CD8-positive, alpha-beta T cell (primary cell): ENCODE measurements at regions of chr4 and their contacts with region 1.

Region 1: DNA sequence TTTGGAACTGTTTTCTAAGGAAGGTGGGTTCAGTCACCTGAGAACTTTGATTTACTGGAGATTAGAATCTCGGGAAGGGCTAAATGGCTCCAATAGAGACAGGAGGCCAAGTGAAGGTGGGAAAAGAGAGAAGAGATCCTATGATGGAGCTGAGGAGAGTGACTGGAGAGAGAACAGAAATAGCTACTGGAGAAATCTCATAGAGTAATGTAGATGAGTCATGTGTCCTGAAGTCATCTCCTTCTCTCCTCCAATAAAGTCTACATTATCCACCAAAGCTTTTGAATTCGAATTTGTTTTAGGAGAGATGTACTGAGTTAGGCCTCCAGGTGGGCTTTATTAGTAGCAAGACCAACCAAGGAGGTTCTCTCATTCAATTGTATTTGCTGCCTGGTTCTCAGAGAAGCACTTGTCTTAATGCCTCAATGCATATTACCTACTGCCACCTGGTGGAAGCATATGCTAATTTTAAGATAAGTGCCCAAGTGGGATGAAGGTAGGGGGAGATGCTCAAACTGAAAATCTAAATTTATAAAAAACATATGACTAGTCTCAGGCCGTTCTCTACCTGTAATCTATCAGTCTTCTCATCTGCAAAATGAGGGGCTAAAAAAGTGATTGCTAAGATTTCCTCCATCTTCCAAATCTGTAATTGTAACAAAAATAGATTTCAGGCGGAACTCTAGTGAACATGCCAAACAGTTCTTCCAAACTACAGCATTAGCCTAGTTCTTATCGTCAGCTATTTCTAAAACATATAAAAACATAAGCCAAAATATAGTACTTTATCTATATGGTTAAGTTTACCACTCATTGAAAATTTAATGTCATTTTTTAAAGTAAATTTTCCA is 24.4 kb downstream of the TXK start:
- DNase-seq: peak in 3 of 9 experiments; percentile 29 to 74 (median 65)
- ATAC-seq: peak; percentile 82
- H3K4me3 ChIP-seq: no peak overlapping the region
- H3K4me3 Mint-ChIP-seq: no peak overlapping the region
- H3K27ac ChIP-seq: no peak overlapping the region
- H3K27ac Mint-ChIP-seq: peak overlapping the region; percentile 75
- H3K4me1 ChIP-seq: peaks cover 34% of the 10 kb centered on the region
- H3K4me1 Mint-ChIP-seq: peaks cover 56% of the 10 kb centered on the region
- H3K27me3 ChIP-seq: no peaks in the 10 kb centered on the region
- H3K27me3 Mint-ChIP-seq: no peaks in the 10 kb centered on the region
- CTCF ChIP-seq: peak; percentile 67

Region 2: GRCh38 chr4:48033825-48034413 is 75.7 kb before region 1 on chr4:
- CTCF ChIA-PET with region 1: interaction called, 12 read pairs
- POLR2A ChIA-PET with region 1: no interaction called
- intact Hi-C with region 1: no loop called
- DNase-seq: peak; percentile 36 to 76 (median 66)
- ATAC-seq: peak; percentile 96
- H3K4me3 ChIP-seq: no peak overlapping the region
- H3K4me3 Mint-ChIP-seq: no peak overlapping the region
- H3K27ac ChIP-seq: no peak overlapping the region
- H3K27ac Mint-ChIP-seq: no peak overlapping the region
- H3K4me1 ChIP-seq: no peaks in the 10 kb centered on the region
- H3K4me1 Mint-ChIP-seq: peaks cover 4% of the 10 kb centered on the region
- H3K27me3 ChIP-seq: no peaks in the 10 kb centered on the region
- H3K27me3 Mint-ChIP-seq: no peaks in the 10 kb centered on the region
- CTCF ChIP-seq: peak; percentile 82

Region 3: DNA sequence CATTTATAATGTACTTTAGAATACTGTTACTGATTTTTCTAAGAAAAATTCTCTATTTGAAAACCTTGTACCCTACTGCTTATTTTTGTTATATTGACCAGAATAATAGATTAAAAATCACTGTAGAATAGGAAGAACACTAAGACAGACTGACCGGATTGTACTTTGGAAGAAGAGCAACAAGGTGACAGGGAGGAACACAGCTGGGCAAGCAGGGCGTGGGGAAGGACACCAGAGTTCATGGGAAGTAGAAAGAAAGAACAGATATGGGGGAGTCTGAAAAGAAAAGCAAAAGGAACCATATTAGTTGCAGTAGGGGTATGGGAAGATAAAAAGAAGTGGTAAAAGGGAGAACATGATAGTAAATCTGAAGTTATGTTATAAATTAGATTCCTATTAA is 14.2 kb before region 1 on chr4:
- CTCF ChIA-PET with region 1: interaction called, 11 read pairs
- POLR2A ChIA-PET with region 1: no interaction called
- intact Hi-C with region 1: no loop called
- DNase-seq: no peak
- ATAC-seq: no peak
- H3K4me3 ChIP-seq: no peak overlapping the region
- H3K4me3 Mint-ChIP-seq: no peak overlapping the region
- H3K27ac ChIP-seq: no peak overlapping the region
- H3K27ac Mint-ChIP-seq: peak overlapping the region; percentile 75
- H3K4me1 ChIP-seq: no peaks in the 10 kb centered on the region
- H3K4me1 Mint-ChIP-seq: peaks cover 15% of the 10 kb centered on the region
- H3K27me3 ChIP-seq: no peaks in the 10 kb centered on the region
- H3K27me3 Mint-ChIP-seq: no peaks in the 10 kb centered on the region
- CTCF ChIP-seq: no peak

Region 4: GRCh38 chr4:48122756-48123155 is 13.1 kb after region 1 on chr4:
- CTCF ChIA-PET with region 1: interaction called, 15 read pairs
- POLR2A ChIA-PET with region 1: interaction called, 3 read pairs
- intact Hi-C with region 1: loop called in 1 of 2 experiments (anchors 2 kb)
- DNase-seq: no peak
- ATAC-seq: no peak
- H3K4me3 ChIP-seq: no peak overlapping the region
- H3K4me3 Mint-ChIP-seq: no peak overlapping the region
- H3K27ac ChIP-seq: no peak overlapping the region
- H3K27ac Mint-ChIP-seq: no peak overlapping the region
- H3K4me1 ChIP-seq: peaks cover 96% of the 10 kb centered on the region
- H3K4me1 Mint-ChIP-seq: peaks cover 69% of the 10 kb centered on the region
- H3K27me3 ChIP-seq: no peaks in the 10 kb centered on the region
- H3K27me3 Mint-ChIP-seq: no peaks in the 10 kb centered on the region
- CTCF ChIP-seq: no peak

Region 5: DNA sequence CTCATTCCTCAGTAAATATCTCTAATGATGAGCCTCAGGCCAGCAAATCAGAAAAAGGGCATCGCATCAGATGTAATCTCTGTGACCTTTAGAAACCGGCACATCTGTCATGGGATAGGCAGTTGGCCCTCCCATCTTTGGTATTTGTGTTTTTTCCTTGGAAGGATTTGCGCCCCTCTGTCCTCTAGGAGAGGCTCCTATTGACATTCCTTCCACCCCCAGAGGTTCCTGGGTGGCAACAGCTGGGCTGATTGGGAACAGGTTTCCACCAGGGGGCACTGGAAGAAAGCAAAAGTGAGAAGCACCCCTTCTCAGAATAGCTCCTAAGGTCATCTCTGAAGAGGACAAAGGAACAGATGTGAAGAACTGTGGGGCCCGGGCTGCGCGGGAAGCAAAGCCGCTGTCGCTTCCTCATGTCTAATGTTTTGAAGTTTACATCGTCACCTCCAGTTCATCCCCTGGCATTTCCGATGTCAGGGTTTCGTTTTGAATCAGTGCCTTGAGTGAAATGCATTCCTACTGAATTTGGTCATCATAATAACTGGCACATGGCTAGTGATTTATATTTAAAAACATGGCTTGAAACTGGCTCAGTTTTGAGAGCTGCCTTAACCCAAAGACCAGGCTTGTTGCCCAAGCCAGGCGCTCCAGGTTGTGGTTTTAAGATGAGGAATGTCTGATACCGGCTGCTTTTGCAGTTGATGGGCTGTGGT is 18.2 kb after region 1 on chr4:
- CTCF ChIA-PET with region 1: interaction called, 15 read pairs
- POLR2A ChIA-PET with region 1: interaction called, 4 read pairs
- intact Hi-C with region 1: loop called in 1 of 2 experiments (anchors 1 kb)
- DNase-seq: peak; percentile 27 to 81 (median 73)
- ATAC-seq: peak; percentile 67
- H3K4me3 ChIP-seq: peak overlapping the region in 1 of 2 experiments; percentile 18
- H3K4me3 Mint-ChIP-seq: peak overlapping the region; percentile 91
- H3K27ac ChIP-seq: peak overlapping the region; percentile 33 to 67
- H3K27ac Mint-ChIP-seq: peak overlapping the region; percentile 92
- H3K4me1 ChIP-seq: peaks cover 76% of the 10 kb centered on the region
- H3K4me1 Mint-ChIP-seq: peaks cover 87% of the 10 kb centered on the region
- H3K27me3 ChIP-seq: no peaks in the 10 kb centered on the region
- H3K27me3 Mint-ChIP-seq: no peaks in the 10 kb centered on the region
- CTCF ChIP-seq: peak; percentile 59

Region 6: GRCh38 chr4:48133669-48134068 is 24.0 kb after region 1 on chr4:
- CTCF ChIA-PET with region 1: interaction called, 34 read pairs
- POLR2A ChIA-PET with region 1: interaction called, 4 read pairs
- intact Hi-C with region 1: loop called in 1 of 2 experiments (anchors 1 kb)
- DNase-seq: no peak
- ATAC-seq: peak; percentile 10
- H3K4me3 ChIP-seq: peak overlapping the region; percentile 48 to 60
- H3K4me3 Mint-ChIP-seq: peak overlapping the region; percentile 91
- H3K27ac ChIP-seq: peak overlapping the region; percentile 56 to 69
- H3K27ac Mint-ChIP-seq: peak overlapping the region; percentile 92
- H3K4me1 ChIP-seq: peaks cover 65% of the 10 kb centered on the region
- H3K4me1 Mint-ChIP-seq: peaks cover 82% of the 10 kb centered on the region
- H3K27me3 ChIP-seq: no peaks in the 10 kb centered on the region
- H3K27me3 Mint-ChIP-seq: no peaks in the 10 kb centered on the region
- CTCF ChIP-seq: no peak

Region 7: GRCh38 chr4:48162162-48162561 is 52.5 kb after region 1 on chr4:
- CTCF ChIA-PET with region 1: no interaction called
- POLR2A ChIA-PET with region 1: no interaction called
- intact Hi-C with region 1: no loop called
- DNase-seq: no peak
- ATAC-seq: no peak
- H3K4me3 ChIP-seq: no peak overlapping the region
- H3K4me3 Mint-ChIP-seq: no peak overlapping the region
- H3K27ac ChIP-seq: no peak overlapping the region
- H3K27ac Mint-ChIP-seq: no peak overlapping the region
- H3K4me1 ChIP-seq: no peaks in the 10 kb centered on the region
- H3K4me1 Mint-ChIP-seq: peaks cover 3% of the 10 kb centered on the region
- H3K27me3 ChIP-seq: no peaks in the 10 kb centered on the region
- H3K27me3 Mint-ChIP-seq: no peaks in the 10 kb centered on the region
- CTCF ChIP-seq: no peak

Region 8: GRCh38 chr4:48223633-48224295 is 114.1 kb after region 1 on chr4:
- CTCF ChIA-PET with region 1: no interaction called
- POLR2A ChIA-PET with region 1: no interaction called
- intact Hi-C with region 1: no loop called
- DNase-seq: no peak
- ATAC-seq: no peak
- H3K4me3 ChIP-seq: no peak overlapping the region
- H3K4me3 Mint-ChIP-seq: no peak overlapping the region
- H3K27ac ChIP-seq: no peak overlapping the region
- H3K27ac Mint-ChIP-seq: no peak overlapping the region
- H3K4me1 ChIP-seq: no peaks in the 10 kb centered on the region
- H3K4me1 Mint-ChIP-seq: no peaks in the 10 kb centered on the region
- H3K27me3 ChIP-seq: no peaks in the 10 kb centered on the region
- H3K27me3 Mint-ChIP-seq: no peaks in the 10 kb centered on the region
- CTCF ChIP-seq: no peak

Region 9: DNA sequence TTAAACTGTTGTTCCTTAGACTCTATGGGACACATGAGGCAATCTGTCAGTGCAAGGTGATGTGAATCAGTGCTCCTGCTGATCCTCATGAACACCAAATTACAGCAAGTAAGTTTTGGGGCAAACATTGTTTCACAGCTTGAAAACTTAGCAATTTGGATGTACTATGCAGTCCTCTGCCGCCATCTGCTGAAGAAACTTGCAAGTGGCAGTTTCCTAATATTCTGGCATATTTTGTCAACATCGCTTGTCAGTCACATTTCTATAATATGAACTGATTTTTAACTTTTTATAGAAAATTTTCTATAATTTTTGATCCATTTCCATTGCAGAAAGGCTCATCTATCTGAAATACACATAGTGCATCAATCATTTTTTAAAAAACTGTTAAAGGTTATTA is 436.7 kb after region 1 on chr4:
- CTCF ChIA-PET with region 1: no interaction called
- POLR2A ChIA-PET with region 1: no interaction called
- intact Hi-C with region 1: loop called in 1 of 2 experiments (anchors 10 kb)
- DNase-seq: peak in 4 of 9 experiments; percentile 9 to 31 (median 22)
- ATAC-seq: no peak
- H3K4me3 ChIP-seq: no peak overlapping the region
- H3K4me3 Mint-ChIP-seq: no peak overlapping the region
- H3K27ac ChIP-seq: no peak overlapping the region
- H3K27ac Mint-ChIP-seq: no peak overlapping the region
- H3K4me1 ChIP-seq: no peaks in the 10 kb centered on the region
- H3K4me1 Mint-ChIP-seq: no peaks in the 10 kb centered on the region
- H3K27me3 ChIP-seq: no peaks in the 10 kb centered on the region
- H3K27me3 Mint-ChIP-seq: no peaks in the 10 kb centered on the region
- CTCF ChIP-seq: peak; percentile 31